Activated CD4-positive, alpha-beta memory T cell treated with anti-CD3 and anti-CD28 coated beads, Interleukin-2, amount 10 ng/mL, durations not matched to agents 7 days and 5 days (primary cell): ENCODE measurements at regions of chr13 and their contacts with region 1.

Region 1: DNA sequence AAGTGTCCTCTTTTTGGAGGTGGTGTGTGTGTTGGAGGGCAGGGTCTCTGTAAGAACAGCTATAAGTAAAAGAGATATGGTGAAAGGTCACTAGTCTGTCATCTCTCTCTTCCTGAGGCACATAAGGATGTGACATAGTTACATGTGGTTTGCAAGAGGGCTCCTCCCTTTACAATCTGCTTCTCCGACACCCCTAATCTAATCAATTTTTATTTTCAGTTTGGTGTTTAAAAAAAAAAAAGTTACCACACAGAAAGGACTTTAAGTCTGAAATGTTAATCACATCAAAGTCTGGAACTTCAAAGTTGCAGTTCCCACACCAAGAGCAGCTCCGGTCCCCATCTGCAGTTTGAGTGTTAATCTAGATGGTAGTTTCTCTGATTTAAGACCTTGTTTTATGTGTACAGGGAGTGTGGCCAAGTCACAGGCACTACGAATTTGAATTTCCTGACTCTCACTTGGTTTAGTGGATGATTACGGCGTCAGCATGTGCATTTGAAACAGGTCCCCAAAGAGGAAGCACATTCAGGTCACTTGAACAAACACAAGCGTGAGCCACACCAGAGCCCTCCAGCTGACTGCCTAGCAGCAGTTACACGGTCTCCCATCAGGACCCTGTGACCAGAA is 53.1 kb downstream of the FOXO1 start:
- DNase-seq: peak; percentile 77
- H3K4me3 Mint-ChIP-seq: peak overlapping the region; percentile 76
- H3K27ac Mint-ChIP-seq: peak overlapping the region; percentile 99
- H3K4me1 Mint-ChIP-seq: peaks cover 87% of the 10 kb centered on the region
- H3K27me3 Mint-ChIP-seq: no peaks in the 10 kb centered on the region

Region 2: DNA sequence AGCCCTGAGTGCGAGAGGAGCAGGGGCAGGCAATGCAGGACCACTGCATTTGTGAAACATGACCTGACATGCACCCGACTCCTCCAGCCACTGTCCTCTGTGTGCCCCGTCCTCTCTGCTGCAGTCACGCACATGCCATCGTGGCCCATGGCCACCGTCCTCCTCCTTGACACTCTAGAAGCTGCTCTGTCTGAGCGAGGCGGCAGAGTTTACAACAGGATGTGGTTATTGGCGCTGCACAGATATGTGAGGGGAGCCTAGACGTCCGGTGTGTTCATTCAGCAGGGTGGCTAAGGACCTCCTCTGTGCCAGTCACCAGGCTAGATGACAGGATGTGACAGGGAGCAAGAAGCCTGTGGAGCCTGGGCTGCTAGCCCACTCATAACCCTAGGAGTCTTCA is 224.7 kb before region 1 on chr13:
- CTCF ChIA-PET with region 1: interaction called, 3 read pairs
- POLR2A ChIA-PET with region 1: interaction called, 11 read pairs
- DNase-seq: peak; percentile 92
- H3K4me3 Mint-ChIP-seq: peak overlapping the region; percentile 70
- H3K27ac Mint-ChIP-seq: peak overlapping the region; percentile 90
- H3K4me1 Mint-ChIP-seq: peaks cover 40% of the 10 kb centered on the region
- H3K27me3 Mint-ChIP-seq: no peaks in the 10 kb centered on the region

Region 3: DNA sequence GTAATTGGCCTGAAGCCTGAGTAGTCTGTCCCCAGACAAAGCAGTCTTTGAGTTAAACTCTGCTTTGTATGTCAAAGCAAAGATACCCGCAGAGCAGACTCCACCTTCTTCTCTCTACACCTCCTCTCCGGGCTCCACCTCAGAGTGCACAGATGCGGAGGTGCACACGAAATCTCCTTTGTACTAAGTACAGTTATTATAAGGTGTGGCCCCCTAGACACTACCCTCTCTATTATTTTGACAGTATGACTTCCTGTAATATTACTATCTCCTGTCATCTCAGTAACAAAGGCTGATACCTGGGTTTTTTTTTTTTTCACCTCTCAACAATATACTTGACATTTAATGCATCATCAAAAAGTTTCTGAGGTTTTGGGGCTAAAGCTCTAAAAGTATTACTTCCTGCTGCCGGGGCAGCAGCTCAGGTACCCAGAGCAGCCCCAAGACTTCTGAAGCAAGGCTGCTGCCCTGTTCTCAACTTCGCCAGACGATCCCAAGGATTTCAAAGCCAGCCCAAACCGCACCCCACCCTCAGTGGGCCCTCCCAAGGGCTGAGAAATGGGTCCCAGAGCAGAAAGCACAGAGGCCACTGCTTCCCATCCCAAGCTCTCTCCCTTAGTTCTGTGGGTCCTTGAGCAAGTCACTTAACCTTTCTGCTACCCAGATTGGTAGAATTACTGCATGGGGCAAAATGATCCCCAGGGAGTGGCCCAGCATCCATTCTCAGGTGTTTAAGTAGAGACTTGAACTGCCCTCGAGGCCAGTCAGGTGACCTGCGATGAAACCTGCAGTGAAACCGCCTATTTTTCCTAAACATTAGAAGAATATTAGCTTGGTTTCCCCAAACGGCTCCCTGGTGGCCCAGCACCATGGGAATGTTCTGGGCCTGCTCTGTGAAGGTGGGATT is 127.4 kb before region 1 on chr13:
- CTCF ChIA-PET with region 1: no interaction called
- POLR2A ChIA-PET with region 1: interaction called, 10 read pairs
- DNase-seq: peak; percentile 69
- H3K4me3 Mint-ChIP-seq: peak overlapping the region; percentile 9
- H3K27ac Mint-ChIP-seq: peak overlapping the region; percentile 94
- H3K4me1 Mint-ChIP-seq: peaks cover 59% of the 10 kb centered on the region
- H3K27me3 Mint-ChIP-seq: no peaks in the 10 kb centered on the region

Region 4: GRCh38 chr13:40596484-40596883 is 16.8 kb before region 1 on chr13:
- CTCF ChIA-PET with region 1: interaction called, 7 read pairs
- POLR2A ChIA-PET with region 1: interaction called, 27 read pairs
- DNase-seq: no peak
- H3K4me3 Mint-ChIP-seq: peak overlapping the region; percentile 29
- H3K27ac Mint-ChIP-seq: peak overlapping the region; percentile 50
- H3K4me1 Mint-ChIP-seq: peaks cover 68% of the 10 kb centered on the region
- H3K27me3 Mint-ChIP-seq: no peaks in the 10 kb centered on the region

Region 5: DNA sequence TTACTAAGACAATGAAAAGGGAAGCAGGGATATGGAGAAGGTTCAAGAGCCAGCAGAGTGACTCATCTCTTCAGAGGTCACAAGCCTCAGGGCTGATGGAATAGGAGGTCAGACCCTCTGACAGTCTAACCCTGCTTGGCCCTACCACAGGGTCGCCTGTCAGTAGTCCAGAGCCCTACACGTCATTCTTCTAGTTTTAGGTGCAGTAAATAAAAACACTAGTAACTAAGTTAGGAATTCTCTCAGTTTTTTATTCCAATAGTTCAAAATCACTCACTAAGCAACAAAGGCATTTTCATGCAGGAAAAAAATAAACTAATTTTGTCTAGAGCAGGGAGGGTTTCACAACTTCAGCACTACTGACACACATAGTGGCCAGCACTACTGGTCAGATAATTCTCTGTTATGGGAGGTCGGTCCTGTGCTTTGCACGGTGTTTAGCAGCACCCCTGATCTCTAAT is 25.9 kb after region 1 on chr13:
- CTCF ChIA-PET with region 1: no interaction called
- POLR2A ChIA-PET with region 1: interaction called, 20 read pairs
- DNase-seq: no peak
- H3K4me3 Mint-ChIP-seq: no peak overlapping the region
- H3K27ac Mint-ChIP-seq: no peak overlapping the region
- H3K4me1 Mint-ChIP-seq: peaks cover 78% of the 10 kb centered on the region
- H3K27me3 Mint-ChIP-seq: no peaks in the 10 kb centered on the region

Region 6: GRCh38 chr13:40644838-40645604 is 31.7 kb after region 1 on chr13:
- CTCF ChIA-PET with region 1: no interaction called
- POLR2A ChIA-PET with region 1: interaction called, 20 read pairs
- DNase-seq: no peak
- H3K4me3 Mint-ChIP-seq: peak overlapping the region; percentile 37
- H3K27ac Mint-ChIP-seq: peak overlapping the region; percentile 79
- H3K4me1 Mint-ChIP-seq: peaks cover 91% of the 10 kb centered on the region
- H3K27me3 Mint-ChIP-seq: no peaks in the 10 kb centered on the region

Region 7: DNA sequence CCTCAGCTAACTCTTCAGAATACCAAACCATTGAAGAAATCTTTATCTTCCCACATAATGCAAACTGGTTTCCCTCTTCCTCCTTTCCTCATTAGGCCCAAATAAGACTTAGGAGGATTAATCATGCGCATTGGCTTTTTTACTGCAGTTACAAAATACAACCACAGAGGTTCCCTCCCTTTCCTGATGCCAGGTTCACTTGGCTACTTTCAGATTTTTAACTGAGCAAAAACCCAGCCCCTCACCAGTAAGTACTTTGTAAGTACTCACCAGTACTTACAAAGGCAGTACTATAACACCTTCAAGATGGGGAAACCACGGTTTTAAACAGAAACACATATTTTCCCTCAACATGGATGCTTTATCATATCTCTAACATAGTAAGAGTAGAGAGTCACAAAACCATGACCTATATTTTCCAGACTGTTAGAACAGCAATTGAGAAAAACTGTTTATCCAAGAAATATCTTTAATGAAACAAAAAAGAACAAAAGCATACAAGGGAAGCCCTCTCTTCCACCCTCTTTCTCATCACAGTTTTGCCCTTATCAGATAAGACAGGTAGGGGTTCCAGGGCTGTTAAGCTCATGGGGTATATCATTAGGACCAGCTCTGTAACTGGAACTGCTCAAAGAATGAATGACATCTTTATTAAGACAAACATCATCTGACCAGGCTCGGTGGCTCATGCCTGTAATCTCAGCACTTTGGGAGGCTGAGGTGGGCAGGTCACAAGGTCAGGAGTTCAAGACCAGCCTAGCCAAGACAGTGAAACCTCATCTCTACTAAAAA is 40.4 kb after region 1 on chr13:
- CTCF ChIA-PET with region 1: interaction called, 3 read pairs
- POLR2A ChIA-PET with region 1: interaction called, 26 read pairs
- DNase-seq: no peak
- H3K4me3 Mint-ChIP-seq: peak overlapping the region; percentile 71
- H3K27ac Mint-ChIP-seq: peak overlapping the region; percentile 93
- H3K4me1 Mint-ChIP-seq: peaks cover 88% of the 10 kb centered on the region
- H3K27me3 Mint-ChIP-seq: no peaks in the 10 kb centered on the region